Activated CD4-positive, alpha-beta memory T cell treated with anti-CD3 and anti-CD28 coated beads, Interleukin-2, amount 10 ng/mL, durations not matched to agents 7 days and 5 days (primary cell): ENCODE measurements at regions of chr1 and their contacts with region 1.

Region 1: DNA sequence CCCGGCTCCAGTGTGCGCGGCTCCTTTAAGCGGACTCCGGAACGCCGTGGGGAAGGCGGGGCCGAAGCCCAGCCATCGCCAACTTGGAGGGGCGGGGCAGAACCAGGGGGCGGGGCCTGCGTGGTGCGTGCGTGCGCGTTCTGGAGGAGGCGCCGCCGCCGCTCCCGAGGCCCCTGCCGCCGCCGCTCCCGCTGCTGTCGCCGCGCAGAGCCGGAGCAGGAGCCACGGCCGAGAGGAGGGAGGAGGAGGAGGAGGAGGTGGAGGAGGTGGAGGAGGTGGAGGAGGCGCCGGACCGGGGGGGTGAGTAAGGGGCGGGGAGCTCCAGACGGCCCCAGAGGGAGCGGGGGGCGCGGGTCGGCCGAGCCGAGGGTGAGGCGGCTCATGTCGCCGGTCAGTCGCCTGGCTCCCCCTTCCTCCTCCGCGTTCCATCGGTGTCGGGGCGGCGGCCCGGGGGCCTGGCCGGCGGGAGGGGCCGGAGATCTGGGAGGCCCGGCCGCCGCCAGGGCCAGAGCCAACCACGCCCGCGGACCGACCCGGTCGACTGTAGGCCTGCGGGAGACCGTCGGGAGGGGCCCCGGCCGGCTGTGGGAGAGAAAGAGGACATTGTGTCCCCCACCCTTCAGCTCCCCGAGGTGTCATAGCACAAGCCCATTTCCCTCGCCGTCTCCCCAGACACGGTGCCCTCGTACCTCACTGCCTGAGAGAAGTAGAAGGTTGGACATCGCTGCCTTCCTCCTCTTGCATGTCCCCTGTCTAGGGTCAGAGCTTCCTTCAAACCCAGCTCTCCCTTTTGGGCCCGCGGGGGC is at the start of gene RAP1A:
- DNase-seq: peak; percentile 95
- H3K4me3 Mint-ChIP-seq: peak within 1 kb of the TSS; percentile 93
- H3K27ac Mint-ChIP-seq: peak within 1 kb of the TSS; percentile 86
- H3K4me1 Mint-ChIP-seq: peaks cover 70% of the 10 kb centered on the region
- H3K27me3 Mint-ChIP-seq: no peaks in the 10 kb centered on the region
- total RNA-seq, gene RAP1A: 219 to 221 TPM

Region 2: DNA sequence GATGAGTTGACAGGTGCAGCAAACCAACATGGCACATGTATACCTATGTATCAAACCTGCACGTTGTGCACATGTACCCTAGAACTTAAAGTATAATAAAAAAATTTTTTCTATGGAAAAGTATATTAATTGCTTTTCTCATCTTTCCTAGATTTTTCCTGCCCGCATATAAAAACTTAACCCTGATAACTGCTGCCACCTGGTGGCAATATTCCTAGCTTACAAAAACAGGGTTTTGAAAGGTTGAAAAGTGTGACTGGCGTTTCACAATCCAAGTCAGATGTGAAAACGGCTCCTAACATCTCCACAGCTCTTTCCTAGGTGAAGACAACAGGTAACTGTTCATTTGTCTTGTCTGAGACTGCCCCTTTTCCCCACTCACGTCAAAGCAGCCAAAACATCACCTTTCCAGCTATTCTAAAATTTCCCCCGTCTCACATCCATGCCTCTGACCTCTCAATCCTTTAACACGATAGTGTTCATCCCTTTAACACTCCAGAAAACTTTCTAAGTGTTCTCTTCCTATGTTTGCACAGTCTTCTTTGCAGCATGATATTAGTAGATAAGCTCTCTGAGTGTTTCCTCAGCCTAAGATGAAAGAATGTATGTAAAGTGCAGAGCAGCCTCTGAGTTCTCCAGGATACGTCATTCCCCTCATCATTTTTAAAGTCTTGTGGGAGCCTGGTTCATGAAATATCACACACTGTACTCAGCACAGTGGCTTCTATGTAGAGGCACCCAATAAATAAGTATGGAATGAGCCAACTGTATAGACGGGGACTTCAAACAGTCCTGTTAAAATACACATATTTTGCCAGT is 219.8 kb before region 1 on chr1:
- CTCF ChIA-PET with region 1: no interaction called
- POLR2A ChIA-PET with region 1: no interaction called
- DNase-seq: peak; percentile 45
- H3K4me3 Mint-ChIP-seq: no peak overlapping the region
- H3K27ac Mint-ChIP-seq: no peak overlapping the region
- H3K4me1 Mint-ChIP-seq: peaks cover 8% of the 10 kb centered on the region
- H3K27me3 Mint-ChIP-seq: peaks cover 43% of the 10 kb centered on the region

Region 3: GRCh38 chr1:111633736-111634247 is 14.0 kb after region 1 on chr1:
- CTCF ChIA-PET with region 1: no interaction called
- POLR2A ChIA-PET with region 1: interaction called, 21 read pairs
- DNase-seq: no peak
- H3K4me3 Mint-ChIP-seq: no peak overlapping the region
- H3K27ac Mint-ChIP-seq: no peak overlapping the region
- H3K4me1 Mint-ChIP-seq: peaks cover 76% of the 10 kb centered on the region
- H3K27me3 Mint-ChIP-seq: no peaks in the 10 kb centered on the region

Region 4: DNA sequence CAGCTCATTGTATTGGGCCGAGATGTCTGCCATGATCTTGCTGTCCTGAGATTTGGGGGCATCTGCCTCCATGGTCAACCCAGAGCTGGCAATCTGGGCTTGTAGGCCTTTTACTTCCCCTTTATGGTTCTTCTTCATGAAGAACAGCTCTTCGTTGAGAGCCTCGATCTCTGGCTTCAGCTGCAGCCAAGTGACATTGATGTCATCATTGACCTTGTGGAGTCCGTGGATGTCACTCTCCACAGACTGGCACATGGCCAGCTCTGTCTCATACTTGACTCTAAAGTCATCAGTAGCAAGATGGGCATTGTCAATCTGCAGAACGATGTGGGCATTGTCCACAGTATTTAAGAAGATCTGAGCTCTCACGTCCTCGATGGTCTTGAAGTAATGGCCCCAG is 29.0 kb after region 1 on chr1:
- CTCF ChIA-PET with region 1: no interaction called
- POLR2A ChIA-PET with region 1: interaction called, 13 read pairs
- DNase-seq: no peak
- H3K4me3 Mint-ChIP-seq: no peak overlapping the region
- H3K27ac Mint-ChIP-seq: no peak overlapping the region
- H3K4me1 Mint-ChIP-seq: peaks cover 71% of the 10 kb centered on the region
- H3K27me3 Mint-ChIP-seq: no peaks in the 10 kb centered on the region